CD8-positive, alpha-beta T cell (primary cell): ENCODE measurements at regions of chr6 and their contacts with region 1.

Region 1: GRCh38 chr6:141437685-141438084 is 695.0 kb upstream of the GJE1 start:
- DNase-seq: no peak
- ATAC-seq: no peak
- H3K4me3 ChIP-seq: no peak overlapping the region
- H3K4me3 Mint-ChIP-seq: no peak overlapping the region
- H3K27ac ChIP-seq: no peak overlapping the region
- H3K27ac Mint-ChIP-seq: no peak overlapping the region
- H3K4me1 ChIP-seq: no peaks in the 10 kb centered on the region
- H3K4me1 Mint-ChIP-seq: no peaks in the 10 kb centered on the region
- H3K27me3 ChIP-seq: no peaks in the 10 kb centered on the region
- H3K27me3 Mint-ChIP-seq: peaks cover 1% of the 10 kb centered on the region
- CTCF ChIP-seq: no peak

Region 2: GRCh38 chr6:141451508-141452353 is 14.0 kb after region 1 on chr6:
- CTCF ChIA-PET with region 1: no interaction called
- POLR2A ChIA-PET with region 1: no interaction called
- intact Hi-C with region 1: loop called in 1 of 2 experiments (anchors 1 kb)
- DNase-seq: no peak
- ATAC-seq: no peak
- H3K4me3 ChIP-seq: no peak overlapping the region
- H3K4me3 Mint-ChIP-seq: no peak overlapping the region
- H3K27ac ChIP-seq: no peak overlapping the region
- H3K27ac Mint-ChIP-seq: no peak overlapping the region
- H3K4me1 ChIP-seq: no peaks in the 10 kb centered on the region
- H3K4me1 Mint-ChIP-seq: no peaks in the 10 kb centered on the region
- H3K27me3 ChIP-seq: no peaks in the 10 kb centered on the region
- H3K27me3 Mint-ChIP-seq: no peaks in the 10 kb centered on the region
- CTCF ChIP-seq: no peak